ENCODE measurements at regions of chr3 and their contacts with region 1.

Region 1: GRCh38 chr3:141913150-141913811 is 36.8 kb downstream of the ATP1B3 start:
- DNase-seq: no peak
- ATAC-seq: peak; percentile 58
- H3K4me3 Mint-ChIP-seq: no peak overlapping the region
- H3K27ac Mint-ChIP-seq: no peak overlapping the region
- H3K4me1 Mint-ChIP-seq: no peaks in the 10 kb centered on the region
- H3K27me3 Mint-ChIP-seq: no peaks in the 10 kb centered on the region
- CTCF ChIP-seq: peak; percentile 48

Region 2: GRCh38 chr3:141303481-141304223 is 609.6 kb before region 1 on chr3:
- CTCF ChIA-PET with region 1: no interaction called
- POLR2A ChIA-PET with region 1: no interaction called
- intact Hi-C with region 1: loop called (anchors 2 kb)
- DNase-seq: no peak
- ATAC-seq: peak; percentile 88
- H3K4me3 Mint-ChIP-seq: no peak overlapping the region
- H3K27ac Mint-ChIP-seq: no peak overlapping the region
- H3K4me1 Mint-ChIP-seq: peaks cover 2% of the 10 kb centered on the region
- H3K27me3 Mint-ChIP-seq: no peaks in the 10 kb centered on the region
- CTCF ChIP-seq: no peak

Region 3: DNA sequence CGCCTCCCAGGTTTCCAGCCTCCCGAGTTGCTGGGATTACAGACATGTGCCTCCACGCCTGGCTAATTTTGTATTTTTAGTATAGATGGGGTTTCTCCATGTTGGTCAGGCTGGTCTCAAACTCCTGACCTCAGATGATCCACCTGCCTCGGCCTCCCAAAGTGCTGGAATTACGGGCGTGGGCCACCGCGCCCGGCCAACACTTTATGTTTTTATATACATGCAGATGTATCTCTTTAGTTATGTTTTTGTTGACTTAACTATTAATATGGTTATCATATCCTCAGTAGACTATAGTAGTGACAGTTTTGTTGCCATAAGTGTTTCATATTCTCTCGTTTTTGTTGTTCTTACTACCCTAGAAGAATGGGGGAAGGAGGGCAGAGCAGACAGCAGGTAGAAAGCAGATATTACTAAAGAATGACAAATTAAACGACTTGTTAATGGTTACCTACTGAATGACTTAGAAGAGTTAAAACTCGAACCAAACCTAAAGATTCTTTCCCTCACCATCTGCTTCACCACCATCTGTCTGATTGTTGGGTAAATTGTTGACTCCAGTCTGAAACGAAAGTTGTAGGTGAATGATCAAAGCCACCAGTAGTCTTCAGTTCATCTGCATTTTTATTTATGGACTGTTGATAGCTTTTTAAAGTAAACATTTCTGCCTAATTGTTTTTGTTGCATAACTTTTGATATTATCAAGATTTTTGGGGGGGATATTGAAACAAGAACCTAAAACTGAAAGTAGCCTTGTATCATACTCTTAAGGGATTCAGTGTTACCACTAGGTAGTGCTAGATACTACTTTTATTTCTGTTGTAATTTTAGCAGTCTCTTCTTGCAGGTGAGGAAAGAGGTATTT is 337.2 kb before region 1 on chr3:
- CTCF ChIA-PET with region 1: interaction called, 6 read pairs
- POLR2A ChIA-PET with region 1: no interaction called
- intact Hi-C with region 1: loop called (anchors 1 kb)
- DNase-seq: no peak
- ATAC-seq: peak; percentile 47
- H3K4me3 Mint-ChIP-seq: no peak overlapping the region
- H3K27ac Mint-ChIP-seq: peak overlapping the region; percentile 19
- H3K4me1 Mint-ChIP-seq: peaks cover 5% of the 10 kb centered on the region
- H3K27me3 Mint-ChIP-seq: no peaks in the 10 kb centered on the region
- CTCF ChIP-seq: no peak

Region 4: GRCh38 chr3:141644931-141645330 is 268.4 kb before region 1 on chr3:
- CTCF ChIA-PET with region 1: no interaction called
- POLR2A ChIA-PET with region 1: no interaction called
- intact Hi-C with region 1: loop called (anchors 2 kb)
- DNase-seq: peak; percentile 43
- ATAC-seq: peak; percentile 70
- H3K4me3 Mint-ChIP-seq: no peak overlapping the region
- H3K27ac Mint-ChIP-seq: no peak overlapping the region
- H3K4me1 Mint-ChIP-seq: no peaks in the 10 kb centered on the region
- H3K27me3 Mint-ChIP-seq: peaks cover 5% of the 10 kb centered on the region
- CTCF ChIP-seq: no peak